Ascending aorta (tissue), 2 donors: ENCODE measurements at regions of chr11 and their contacts with region 1.

Region 1: GRCh38 chr11:13462901-13463778 is at the start of gene BTBD10:
- DNase-seq: peak; percentile 71 to 96
- H3K4me3 ChIP-seq: peak within 1 kb of the TSS; percentile 68 to 95
- H3K27ac ChIP-seq: peak within 1 kb of the TSS; percentile 82 to 93
- H3K4me1 ChIP-seq: peaks cover 0 to 19% of the 10 kb centered on the region in 2 donors
- H3K27me3 ChIP-seq: no peaks in the 10 kb centered on the region
- CTCF ChIP-seq: no peak
- total RNA-seq, gene BTBD10: 10.1 TPM

Region 2: DNA sequence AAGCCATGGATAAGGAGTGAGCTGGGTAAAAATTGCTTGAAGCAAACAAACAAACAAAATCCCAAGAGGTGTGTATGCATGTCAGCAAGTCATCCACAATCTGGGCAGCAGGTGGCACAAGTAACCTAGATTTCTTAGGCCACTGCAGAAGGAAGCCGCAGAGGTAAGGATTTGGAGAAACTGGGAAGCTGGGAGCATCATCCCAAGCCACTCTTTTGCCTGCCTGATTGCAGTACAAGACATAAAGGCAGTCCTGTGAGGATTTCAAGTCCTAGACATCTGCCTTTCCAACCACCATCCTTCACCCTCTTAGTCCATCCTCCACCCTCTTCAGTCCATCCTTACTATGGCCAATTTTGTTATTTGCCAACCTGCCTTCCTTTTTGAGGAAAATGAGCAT is 252.7 kb before region 1 on chr11:
- intact Hi-C with region 1: loop called (anchors 10 kb)
- DNase-seq: peak in 1 of 2 donors; percentile 72
- H3K4me3 ChIP-seq: no peak overlapping the region
- H3K27ac ChIP-seq: no peak overlapping the region
- H3K4me1 ChIP-seq: no peaks in the 10 kb centered on the region
- H3K27me3 ChIP-seq: no peaks in the 10 kb centered on the region
- CTCF ChIP-seq: peak; percentile 49 to 67 (median 55)

Region 3: DNA sequence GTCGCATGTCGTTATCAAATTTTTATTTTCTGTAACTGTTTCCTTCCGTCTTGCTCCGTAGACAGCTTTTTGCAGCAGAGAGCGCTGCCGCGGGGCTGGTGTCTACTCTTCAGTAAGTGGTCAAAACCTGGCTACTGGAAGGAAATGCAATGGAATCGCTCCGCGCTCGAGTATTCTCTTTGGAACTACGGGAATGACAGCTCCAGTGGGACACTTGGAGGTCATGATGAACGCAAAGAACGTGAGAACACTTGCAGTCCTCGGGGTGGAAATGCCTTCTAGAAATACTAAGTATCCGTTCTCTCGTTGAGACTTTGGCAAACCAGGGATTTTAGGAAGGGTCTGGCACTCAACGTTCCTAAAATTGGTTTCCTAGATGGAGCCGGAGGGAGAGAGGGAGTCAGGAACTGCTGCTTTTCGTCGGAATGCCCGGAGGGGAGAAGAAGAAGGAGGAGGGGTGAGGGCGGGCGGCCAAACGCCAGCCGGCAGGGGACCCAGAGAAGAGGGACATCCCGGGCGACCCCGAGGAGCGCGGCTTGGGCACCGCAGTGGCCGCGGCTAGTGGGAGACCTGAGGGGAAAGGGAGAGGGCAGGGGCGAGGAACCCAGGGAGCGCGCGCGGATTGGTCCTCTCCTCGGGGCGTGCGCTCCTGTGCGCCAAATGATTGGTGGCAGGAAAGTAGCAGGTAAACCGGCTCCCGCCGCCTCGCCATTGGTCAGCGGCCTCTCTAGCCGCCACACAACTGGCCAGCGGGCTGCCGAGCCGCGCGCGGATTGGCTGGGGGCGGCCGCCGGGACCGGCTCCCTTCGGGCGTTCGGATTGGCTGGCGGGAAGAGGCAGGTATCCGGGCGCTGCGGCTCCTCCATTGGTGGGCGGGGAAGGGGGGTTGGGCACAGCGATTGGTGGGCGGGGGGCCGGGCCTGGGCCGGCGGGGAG is 186.0 kb before region 1 on chr11:
- intact Hi-C with region 1: loop called (anchors 2 kb)
- DNase-seq: peak; percentile 95 to 99
- H3K4me3 ChIP-seq: peak overlapping the region; percentile 86 to 90
- H3K27ac ChIP-seq: peak overlapping the region; percentile 93 to 96
- H3K4me1 ChIP-seq: peaks cover 3 to 14% of the 10 kb centered on the region in 2 donors
- H3K27me3 ChIP-seq: no peaks in the 10 kb centered on the region
- CTCF ChIP-seq: no peak

Region 4: GRCh38 chr11:13324709-13325108 is 138.4 kb before region 1 on chr11:
- intact Hi-C with region 1: no loop called
- DNase-seq: no peak
- H3K4me3 ChIP-seq: no peak overlapping the region
- H3K27ac ChIP-seq: no peak overlapping the region
- H3K4me1 ChIP-seq: no peaks in the 10 kb centered on the region
- H3K27me3 ChIP-seq: no peaks in the 10 kb centered on the region
- CTCF ChIP-seq: no peak

Region 5: GRCh38 chr11:13384908-13385640 is 78.1 kb before region 1 on chr11:
- intact Hi-C with region 1: loop called (anchors 5 kb)
- DNase-seq: peak in 1 of 2 donors; percentile 65
- H3K4me3 ChIP-seq: peak overlapping the region in 1 of 2 donors; percentile 4
- H3K27ac ChIP-seq: peak overlapping the region; percentile 66 to 76
- H3K4me1 ChIP-seq: peaks cover 0 to 4% of the 10 kb centered on the region in 2 donors
- H3K27me3 ChIP-seq: no peaks in the 10 kb centered on the region
- CTCF ChIP-seq: peak in 2 of 3 experiments; percentile 61 to 72

Region 6: DNA sequence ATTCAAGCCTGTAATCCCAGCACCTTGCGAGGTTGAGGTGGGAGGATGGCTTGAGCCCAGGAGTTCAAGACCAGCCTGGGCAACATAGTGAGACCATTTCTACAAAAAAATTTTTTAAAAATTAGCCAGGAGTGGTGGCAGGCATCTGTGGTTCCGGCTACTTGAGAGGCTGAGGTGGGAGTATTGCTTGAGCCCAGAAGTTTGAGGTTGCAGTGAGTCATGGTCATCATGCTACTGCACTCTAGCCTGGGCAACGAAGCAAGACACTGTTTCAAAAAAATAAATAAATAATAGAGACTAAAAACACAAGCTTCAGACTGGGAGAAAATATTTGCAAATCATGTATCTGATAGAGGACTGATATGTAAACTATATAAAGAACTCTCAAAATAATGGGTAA is 33.3 kb before region 1 on chr11:
- intact Hi-C with region 1: no loop called
- DNase-seq: no peak
- H3K4me3 ChIP-seq: no peak overlapping the region
- H3K27ac ChIP-seq: no peak overlapping the region
- H3K4me1 ChIP-seq: no peaks in the 10 kb centered on the region
- H3K27me3 ChIP-seq: no peaks in the 10 kb centered on the region
- CTCF ChIP-seq: no peak

Region 7: GRCh38 chr11:13440100-13440855 is 22.9 kb before region 1 on chr11:
- intact Hi-C with region 1: loop called (anchors 1 kb)
- DNase-seq: peak in 1 of 2 donors; percentile 71
- H3K4me3 ChIP-seq: peak overlapping the region; percentile 44 to 57
- H3K27ac ChIP-seq: peak overlapping the region; percentile 54 to 63
- H3K4me1 ChIP-seq: peaks cover 0 to 8% of the 10 kb centered on the region in 2 donors
- H3K27me3 ChIP-seq: no peaks in the 10 kb centered on the region
- CTCF ChIP-seq: no peak

Region 8: DNA sequence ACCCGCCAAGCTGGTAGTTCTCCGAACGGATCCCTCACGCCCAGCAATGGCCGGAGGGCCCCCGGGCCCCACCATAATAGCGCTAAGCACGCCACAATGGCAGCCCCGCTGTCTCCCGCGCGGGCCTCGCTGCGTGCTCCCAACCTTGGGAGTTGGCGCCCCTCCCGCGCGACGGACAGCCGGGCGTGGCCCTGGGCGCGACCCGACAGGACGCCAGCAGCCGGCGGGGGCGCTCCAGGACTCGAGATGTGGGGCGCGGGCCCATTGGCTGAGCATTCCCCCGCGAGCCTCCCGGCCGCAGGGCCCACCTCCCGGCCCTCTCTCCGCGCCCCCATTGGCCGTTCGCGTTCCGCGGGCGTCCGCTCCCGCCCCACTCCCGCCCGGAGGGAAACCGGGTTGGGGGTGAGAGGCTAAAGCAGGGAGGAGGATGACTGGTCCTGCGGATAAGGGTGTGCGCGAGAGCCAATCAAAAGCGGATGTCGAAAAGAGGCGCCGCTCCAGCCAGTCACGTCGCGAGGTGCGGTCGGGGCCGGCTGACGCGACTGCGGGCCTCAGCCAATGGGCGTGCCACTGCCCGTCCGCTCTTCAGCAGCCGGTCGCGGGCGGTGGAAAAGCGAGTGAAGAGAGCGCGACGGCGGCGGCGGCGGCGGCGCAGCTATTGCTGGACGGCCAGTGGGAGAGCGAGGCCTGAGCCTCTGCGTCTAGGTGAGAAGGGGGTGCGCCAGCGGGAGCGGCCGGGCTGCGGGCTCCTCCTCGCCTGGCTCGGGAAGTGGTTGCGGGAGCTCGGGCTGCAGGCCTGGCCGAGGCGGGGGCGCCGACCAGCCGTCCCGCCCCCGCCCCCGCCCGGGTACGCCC is 205.2 kb after region 1 on chr11 and contains the start of gene FAR1:
- intact Hi-C with region 1: loop called (anchors 5 kb)
- DNase-seq: peak; percentile 96 to 99
- H3K4me3 ChIP-seq: peak within 1 kb of the TSS; percentile 92 to 95
- H3K27ac ChIP-seq: peak within 1 kb of the TSS; percentile 79 to 84
- H3K4me1 ChIP-seq: peaks cover 0 to 3% of the 10 kb centered on the region in 2 donors
- H3K27me3 ChIP-seq: no peaks in the 10 kb centered on the region
- CTCF ChIP-seq: peak; percentile 61 to 64 (median 62)
- total RNA-seq, gene FAR1: 66.0 TPM

Region 9: DNA sequence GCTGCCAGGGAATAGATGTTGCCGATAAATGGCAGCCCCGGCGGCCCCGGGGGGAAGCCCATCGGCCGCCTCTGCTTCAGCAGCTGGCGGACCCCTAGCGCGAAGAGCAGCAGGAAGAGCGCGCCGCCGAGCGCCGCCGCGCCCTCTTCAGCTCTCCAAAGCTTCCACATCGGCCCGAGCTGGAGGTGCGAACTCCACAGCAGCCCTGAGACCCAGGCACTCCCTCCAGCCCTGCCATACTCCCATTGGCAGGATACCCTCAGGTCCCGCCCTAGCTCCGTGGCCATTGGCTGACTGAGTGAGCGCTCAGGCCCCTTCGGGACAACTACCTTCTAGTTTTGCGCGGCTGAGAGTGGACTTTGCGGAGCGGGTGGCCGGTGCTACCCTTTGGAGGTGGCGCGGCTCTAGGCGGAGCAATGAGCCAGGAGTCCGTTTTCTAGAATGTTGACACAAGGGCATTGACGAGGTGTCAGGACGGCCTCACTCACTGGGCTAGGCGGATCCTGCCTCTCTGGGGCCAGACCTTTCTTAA is 1429.0 kb after region 1 on chr11 and contains the start of gene CYP2R1:
- intact Hi-C with region 1: loop called (anchors 5 kb)
- DNase-seq: peak; percentile 88 to 98
- H3K4me3 ChIP-seq: peak within 1 kb of the TSS; percentile 82
- H3K27ac ChIP-seq: peak within 1 kb of the TSS; percentile 90 to 95
- H3K4me1 ChIP-seq: peaks cover 0 to 16% of the 10 kb centered on the region in 2 donors
- H3K27me3 ChIP-seq: no peaks in the 10 kb centered on the region
- CTCF ChIP-seq: peak in 1 of 3 experiments; percentile 3
- total RNA-seq, gene CYP2R1: 40.1 TPM